GM12878 (cell line): ENCODE measurements at regions of chr5 and their contacts with region 1.

Region 1: DNA sequence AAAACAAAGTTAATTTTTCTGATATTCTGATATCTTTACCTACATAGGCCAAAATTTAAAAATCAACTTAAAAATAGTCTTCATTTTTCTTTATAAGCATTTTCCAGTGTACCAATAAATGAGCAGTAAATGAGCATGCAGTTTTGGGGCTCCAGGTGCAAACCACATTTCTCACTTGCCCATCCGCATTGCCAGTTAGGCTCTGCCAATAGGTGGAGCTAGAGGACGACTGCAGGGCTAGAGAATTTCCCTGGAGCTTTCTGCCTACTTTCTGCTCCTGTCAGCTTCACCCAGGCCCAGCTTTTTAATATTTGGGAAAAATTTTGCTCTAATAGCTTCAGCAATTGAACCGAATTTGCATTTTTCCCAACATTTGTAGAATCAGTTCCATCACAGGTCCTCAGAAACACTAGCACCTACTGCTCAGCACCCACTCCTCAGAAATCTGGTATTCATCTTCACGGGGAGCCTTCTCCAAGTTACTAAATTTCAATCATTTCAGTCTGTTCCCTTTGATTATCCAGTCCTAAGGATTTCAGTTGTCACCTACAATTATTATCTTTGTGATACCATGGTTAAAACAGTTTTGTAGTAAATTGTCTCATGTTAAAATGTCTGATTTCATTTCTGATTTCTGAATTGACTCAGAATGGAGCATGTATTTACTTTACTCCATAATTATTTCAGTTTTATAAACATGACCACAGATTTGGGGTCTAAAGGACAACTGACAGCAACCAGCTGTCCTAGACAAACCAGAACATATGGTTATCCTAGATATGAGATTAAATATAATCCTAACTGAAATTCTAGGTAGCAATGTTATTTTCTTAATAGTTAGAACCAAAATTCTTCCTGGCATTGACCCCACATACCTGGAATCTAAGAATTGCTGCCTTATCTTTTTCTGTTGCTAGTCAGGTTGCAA is 104.6 kb upstream of the FAM174A start:
- DNase-seq: peak; percentile 15
- ATAC-seq: peak; percentile 92
- H3K4me3 ChIP-seq: no peak overlapping the region
- H3K27ac ChIP-seq: no peak overlapping the region
- H3K4me1 ChIP-seq: no peaks in the 10 kb centered on the region
- H3K27me3 ChIP-seq: no peaks in the 10 kb centered on the region
- CTCF ChIP-seq: peak; percentile 87 to 98 (median 96)
- EP300 ChIP-seq: no peak
- POLR2A ChIP-seq: no peak
- RAD21 ChIP-seq: peak; percentile 87

Region 2: GRCh38 chr5:100469767-100470166 is 39.2 kb after region 1 on chr5:
- CTCF ChIA-PET with region 1: no interaction called
- POLR2A ChIA-PET with region 1: no interaction called
- RAD21 ChIA-PET with region 1: no interaction called
- SMC1A ChIA-PET with region 1: no interaction called
- in situ Hi-C with region 1: no loop called
- intact Hi-C with region 1: loop called (anchors 5 kb)
- DNase-seq: peak; percentile 38
- ATAC-seq: peak; percentile 99
- H3K4me3 ChIP-seq: no peak overlapping the region
- H3K27ac ChIP-seq: no peak overlapping the region
- H3K4me1 ChIP-seq: no peaks in the 10 kb centered on the region
- H3K27me3 ChIP-seq: no peaks in the 10 kb centered on the region
- CTCF ChIP-seq: no peak
- EP300 ChIP-seq: peak in 1 of 2 experiments; percentile 47; a peak in 1 of 4 replicates
- POLR2A ChIP-seq: no peak
- RAD21 ChIP-seq: no peak; the same call in 1 of the 2 replicates

Region 3: DNA sequence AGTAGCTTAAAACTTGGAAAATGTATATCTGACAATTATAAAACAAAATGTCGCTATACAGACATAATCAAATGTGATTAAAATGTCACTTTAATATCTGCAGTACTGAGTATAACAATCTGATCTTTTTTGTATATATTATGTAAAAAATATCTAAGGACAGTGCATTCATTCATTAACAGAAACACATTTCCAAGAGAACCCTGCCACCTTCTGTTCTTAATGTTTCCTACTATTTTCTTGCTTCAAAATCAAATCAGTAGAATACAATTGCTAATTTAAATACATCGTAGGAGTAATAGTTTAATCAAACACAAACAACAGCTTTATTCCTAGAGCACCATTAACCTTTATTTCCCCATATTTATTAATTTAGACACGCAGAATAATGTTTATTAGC is 615.2 kb after region 1 on chr5:
- CTCF ChIA-PET with region 1: interaction called, 10 read pairs
- POLR2A ChIA-PET with region 1: no interaction called
- RAD21 ChIA-PET with region 1: interaction called, 5 read pairs
- SMC1A ChIA-PET with region 1: interaction called, 4 read pairs
- in situ Hi-C with region 1: no loop called
- intact Hi-C with region 1: loop called (anchors 5 kb)
- DNase-seq: no peak
- ATAC-seq: peak; percentile 55
- H3K4me3 ChIP-seq: no peak overlapping the region
- H3K27ac ChIP-seq: no peak overlapping the region
- H3K4me1 ChIP-seq: no peaks in the 10 kb centered on the region
- H3K27me3 ChIP-seq: no peaks in the 10 kb centered on the region
- CTCF ChIP-seq: peak in 1 of 3 experiments; percentile 5; a peak in 2 of 6 replicates
- EP300 ChIP-seq: no peak
- POLR2A ChIP-seq: no peak
- RAD21 ChIP-seq: peak; percentile 70

Region 4: GRCh38 chr5:101390151-101390908 is 959.8 kb after region 1 on chr5:
- CTCF ChIA-PET with region 1: interaction called, 26 read pairs
- POLR2A ChIA-PET with region 1: no interaction called
- RAD21 ChIA-PET with region 1: interaction called, 7 read pairs
- SMC1A ChIA-PET with region 1: interaction called, 12 read pairs
- in situ Hi-C with region 1: loop called (anchors 25 kb)
- intact Hi-C with region 1: loop called (anchors 1 kb)
- DNase-seq: peak; percentile 12
- ATAC-seq: peak; percentile 57
- H3K4me3 ChIP-seq: no peak overlapping the region
- H3K27ac ChIP-seq: no peak overlapping the region
- H3K4me1 ChIP-seq: no peaks in the 10 kb centered on the region
- H3K27me3 ChIP-seq: no peaks in the 10 kb centered on the region
- CTCF ChIP-seq: peak; percentile 42 to 67 (median 58); a peak in 5 of 6 replicates
- EP300 ChIP-seq: no peak
- POLR2A ChIP-seq: no peak
- RAD21 ChIP-seq: peak; percentile 68

Region 5: DNA sequence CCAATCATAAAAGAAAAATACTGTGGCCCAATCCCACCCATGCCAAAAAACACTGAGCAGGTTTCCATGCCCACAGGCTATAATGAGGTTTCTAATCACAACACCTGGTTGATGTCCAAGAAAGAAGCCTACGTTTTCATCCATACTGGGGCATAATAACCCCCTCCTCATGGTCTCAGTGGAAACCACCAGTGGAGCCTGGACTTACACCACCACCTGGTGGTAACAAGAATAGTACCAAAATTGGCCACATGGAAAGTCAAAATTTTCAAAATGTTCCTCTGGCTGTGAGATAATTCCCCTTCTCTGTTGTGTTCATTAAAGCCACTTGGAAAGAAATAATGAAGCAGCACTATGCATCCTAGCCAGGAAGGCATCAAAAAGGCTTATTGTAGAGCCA is 1159.9 kb after region 1 on chr5:
- CTCF ChIA-PET with region 1: interaction called, 3 read pairs
- POLR2A ChIA-PET with region 1: no interaction called
- RAD21 ChIA-PET with region 1: no interaction called
- SMC1A ChIA-PET with region 1: no interaction called
- in situ Hi-C with region 1: no loop called
- intact Hi-C with region 1: loop called (anchors 5 kb)
- DNase-seq: no peak
- ATAC-seq: peak; percentile 63
- H3K4me3 ChIP-seq: no peak overlapping the region
- H3K27ac ChIP-seq: no peak overlapping the region
- H3K4me1 ChIP-seq: no peaks in the 10 kb centered on the region
- H3K27me3 ChIP-seq: no peaks in the 10 kb centered on the region
- CTCF ChIP-seq: peak; percentile 28 to 42 (median 42); a peak in 5 of 6 replicates
- EP300 ChIP-seq: no peak
- POLR2A ChIP-seq: no peak
- RAD21 ChIP-seq: peak; percentile 55

Region 6: GRCh38 chr5:101678481-101679193 is 1248.1 kb after region 1 on chr5:
- CTCF ChIA-PET with region 1: interaction called, 7 read pairs
- POLR2A ChIA-PET with region 1: no interaction called
- RAD21 ChIA-PET with region 1: no interaction called
- SMC1A ChIA-PET with region 1: no interaction called
- in situ Hi-C with region 1: no loop called
- intact Hi-C with region 1: loop called (anchors 5 kb)
- DNase-seq: peak; percentile 7
- ATAC-seq: peak; percentile 84
- H3K4me3 ChIP-seq: no peak overlapping the region
- H3K27ac ChIP-seq: no peak overlapping the region
- H3K4me1 ChIP-seq: no peaks in the 10 kb centered on the region
- H3K27me3 ChIP-seq: no peaks in the 10 kb centered on the region
- CTCF ChIP-seq: peak; percentile 76 to 89 (median 89)
- EP300 ChIP-seq: no peak
- POLR2A ChIP-seq: no peak
- RAD21 ChIP-seq: peak; percentile 79